MCF 10A (cell line): ENCODE measurements at regions of chr12 and their contacts with region 1.

Region 1: GRCh38 chr12:6723607-6724396 is at the start of gene COPS7A:
- DNase-seq: peak; percentile 99
- H3K4me3 Mint-ChIP-seq: peak within 1 kb of the TSS; percentile 70
- H3K27ac Mint-ChIP-seq: peak within 1 kb of the TSS; percentile 83
- H3K4me1 Mint-ChIP-seq: no peaks in the 10 kb centered on the region
- H3K27me3 Mint-ChIP-seq: no peaks in the 10 kb centered on the region
- CTCF ChIP-seq: no peak
- total RNA-seq, gene COPS7A: 55.5 and 61.3 TPM in 2 replicates

Region 2: GRCh38 chr12:6662906-6663742 is 60.7 kb before region 1 on chr12 and contains the start of gene ING4:
- CTCF ChIA-PET with region 1: no interaction called
- POLR2A ChIA-PET with region 1: interaction called, 11 read pairs
- intact Hi-C with region 1: no loop called
- DNase-seq: peak; percentile 100
- H3K4me3 Mint-ChIP-seq: peak within 1 kb of the TSS; percentile 82
- H3K27ac Mint-ChIP-seq: peak within 1 kb of the TSS; percentile 81
- H3K4me1 Mint-ChIP-seq: peaks cover 8% of the 10 kb centered on the region
- H3K27me3 Mint-ChIP-seq: no peaks in the 10 kb centered on the region
- CTCF ChIP-seq: no peak
- total RNA-seq, gene ING4: 15.2 and 16.1 TPM in 2 replicates

Region 3: GRCh38 chr12:6735448-6736191 is 11.8 kb after region 1 on chr12:
- CTCF ChIA-PET with region 1: interaction called, 9 read pairs
- POLR2A ChIA-PET with region 1: interaction called, 15 read pairs
- intact Hi-C with region 1: no loop called
- DNase-seq: peak; percentile 85
- H3K4me3 Mint-ChIP-seq: peak overlapping the region; percentile 34
- H3K27ac Mint-ChIP-seq: peak overlapping the region; percentile 14
- H3K4me1 Mint-ChIP-seq: peaks cover 9% of the 10 kb centered on the region
- H3K27me3 Mint-ChIP-seq: no peaks in the 10 kb centered on the region
- CTCF ChIP-seq: peak; percentile 57

Region 4: GRCh38 chr12:6764011-6764828 is 40.4 kb after region 1 on chr12:
- CTCF ChIA-PET with region 1: interaction called, 9 read pairs
- POLR2A ChIA-PET with region 1: interaction called, 20 read pairs
- intact Hi-C with region 1: no loop called
- DNase-seq: peak; percentile 99
- H3K4me3 Mint-ChIP-seq: peak overlapping the region; percentile 84
- H3K27ac Mint-ChIP-seq: peak overlapping the region; percentile 95
- H3K4me1 Mint-ChIP-seq: peaks cover 42% of the 10 kb centered on the region
- H3K27me3 Mint-ChIP-seq: no peaks in the 10 kb centered on the region
- CTCF ChIP-seq: no peak